Vagina (tissue), 2 donors: ENCODE measurements at regions of chr12 and their contacts with region 1.

Region 1: DNA sequence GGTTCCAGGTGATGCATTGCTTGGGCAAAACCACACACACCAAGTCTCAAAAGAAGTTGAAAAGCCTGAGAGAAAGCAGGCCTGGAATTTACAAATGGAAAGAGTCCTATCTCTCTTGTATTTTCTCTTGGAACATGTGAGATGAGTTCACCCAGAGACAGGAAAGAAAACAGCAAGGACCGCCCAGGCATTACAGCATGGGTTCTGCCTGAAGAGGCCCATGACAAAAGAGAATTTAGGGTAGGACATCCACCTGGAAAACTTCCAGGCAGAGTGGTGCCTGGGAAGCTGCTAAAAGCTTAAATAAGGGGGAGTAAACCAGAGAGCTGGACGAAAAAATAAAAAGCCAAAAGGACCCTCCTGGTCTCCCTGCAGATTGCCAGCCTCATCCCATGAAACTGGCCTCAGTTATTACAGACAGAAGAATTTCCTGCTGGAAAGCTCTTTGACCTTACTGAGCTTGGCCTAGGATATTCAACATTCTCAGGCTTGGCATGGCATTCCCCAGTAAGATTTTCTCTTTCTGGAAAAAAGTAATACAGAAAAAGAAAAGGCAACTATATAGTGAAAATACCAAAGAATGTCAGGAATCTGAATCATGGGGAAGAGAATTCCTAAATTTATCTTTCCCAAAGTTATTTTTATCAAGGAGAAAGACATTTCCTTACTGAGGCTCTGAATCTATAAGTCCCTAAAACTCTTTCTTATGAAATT is 121.3 kb upstream of the NUDT4 start:
- DNase-seq: no peak
- H3K4me3 ChIP-seq: no peak overlapping the region
- H3K27ac ChIP-seq: no peak overlapping the region
- H3K4me1 ChIP-seq: no peaks in the 10 kb centered on the region
- H3K27me3 ChIP-seq: no peaks in the 10 kb centered on the region
- CTCF ChIP-seq: no peak
- POLR2A ChIP-seq: no peak

Region 2: DNA sequence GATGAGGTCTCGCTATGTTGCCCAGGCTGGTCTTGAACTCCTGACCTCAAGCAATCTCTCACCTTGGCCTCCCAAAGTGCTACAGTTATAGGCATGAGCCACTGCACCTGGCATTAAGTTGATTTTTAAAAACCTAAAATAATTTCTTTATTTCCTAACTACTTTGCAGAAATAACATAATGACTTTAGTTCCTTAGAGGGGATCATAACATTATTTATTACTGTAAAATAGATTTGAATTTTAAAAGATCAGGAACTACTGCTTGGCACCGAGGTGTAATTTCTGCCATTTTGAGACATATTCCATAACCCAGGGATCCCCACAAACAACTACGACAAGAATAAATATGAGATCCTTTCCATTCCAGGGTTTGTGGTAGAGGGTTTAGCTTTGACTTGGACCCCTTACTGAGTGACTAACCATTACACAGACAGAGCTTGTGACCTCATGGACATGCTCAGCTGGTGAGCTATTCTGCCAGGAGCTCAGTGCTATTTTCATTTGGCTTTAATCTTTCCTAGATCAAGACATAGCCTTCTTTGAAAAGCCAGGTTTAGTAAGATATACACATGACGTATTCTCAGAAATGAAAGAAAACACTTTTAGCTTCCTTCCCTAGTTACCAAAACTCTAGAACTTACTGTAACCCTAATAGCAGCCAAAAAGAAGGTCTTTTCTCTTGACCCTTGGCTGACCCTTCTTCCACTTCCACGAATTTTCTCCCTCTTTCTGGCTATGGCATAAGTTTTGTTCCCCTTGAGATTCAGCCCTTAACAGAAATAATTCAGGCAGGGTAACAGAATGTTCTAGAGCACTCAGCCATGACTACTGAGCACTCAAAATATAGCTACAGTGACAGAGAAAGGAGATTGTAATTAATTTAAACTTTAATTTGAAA is 46.2 kb after region 1 on chr12:
- intact Hi-C with region 1: loop called (anchors 1 kb)
- DNase-seq: no peak
- H3K4me3 ChIP-seq: no peak overlapping the region
- H3K27ac ChIP-seq: no peak overlapping the region
- H3K4me1 ChIP-seq: no peaks in the 10 kb centered on the region
- H3K27me3 ChIP-seq: no peaks in the 10 kb centered on the region
- CTCF ChIP-seq: no peak
- POLR2A ChIP-seq: no peak